ENCODE measurements at regions of chr5 and their contacts with region 1.

Region 1: DNA sequence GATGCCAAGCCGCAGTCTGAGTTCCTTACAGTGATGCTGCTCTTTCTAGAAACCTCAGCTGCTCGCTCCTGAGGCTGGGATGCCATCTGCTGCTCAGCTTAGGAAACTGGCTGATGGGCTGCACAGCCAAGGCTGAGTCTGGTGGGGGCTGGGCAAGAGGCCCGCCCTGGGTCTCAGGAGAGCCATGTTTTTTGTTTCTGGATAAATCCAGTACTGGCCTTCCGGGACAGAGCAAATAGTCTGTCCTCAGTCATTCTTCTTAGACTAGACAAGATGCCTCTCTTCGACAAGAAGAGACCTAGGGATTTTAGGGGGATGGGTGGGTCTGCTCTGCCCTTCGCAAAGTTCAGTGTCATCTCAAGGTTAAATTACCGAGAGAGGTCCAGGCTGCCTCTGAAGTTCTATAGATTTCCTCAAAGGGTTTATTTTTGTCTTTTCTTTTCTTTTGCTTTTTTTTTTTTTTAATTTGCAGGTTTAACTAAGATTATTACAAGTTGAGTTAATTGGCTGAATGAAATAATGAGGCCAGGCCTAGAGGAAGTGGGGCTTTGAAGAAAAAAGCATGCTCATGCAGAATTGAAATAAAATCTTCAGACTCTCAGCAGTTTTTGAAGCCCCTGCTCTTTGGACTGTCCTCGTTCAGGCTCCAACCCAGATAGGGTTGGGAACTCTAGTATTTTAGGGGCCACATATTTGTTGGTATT is 30.6 kb upstream of the MATR3 start:
- DNase-seq: peak; percentile 82 to 99 (median 90)

Region 2: DNA sequence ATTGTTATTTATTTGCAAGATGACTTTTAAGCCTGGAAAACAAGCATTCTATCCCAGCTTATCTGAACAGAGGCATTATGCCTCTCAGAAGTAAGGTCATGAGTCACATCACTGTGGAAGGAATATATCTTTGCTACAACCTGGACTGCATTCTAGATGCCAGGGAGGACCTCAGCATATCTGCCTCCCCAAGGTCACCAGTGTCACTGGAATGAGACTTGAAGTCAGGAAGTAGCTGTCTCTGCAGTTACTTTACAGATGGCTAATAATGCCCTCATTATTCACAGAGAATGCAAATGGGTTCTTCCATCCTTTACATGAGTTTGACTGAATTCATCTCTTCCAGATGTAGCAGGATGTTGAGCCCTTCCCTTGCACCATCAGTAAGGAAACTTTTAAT is 1225.6 kb before region 1 on chr5:
- intact Hi-C with region 1: no loop called
- DNase-seq: no peak

Region 3: GRCh38 chr5:138575194-138576015 is 687.5 kb before region 1 on chr5 and contains the start of gene HSPA9:
- intact Hi-C with region 1: loop called (anchors 5 kb)
- DNase-seq: peak; percentile 96 to 100 (median 97)

Region 4: DNA sequence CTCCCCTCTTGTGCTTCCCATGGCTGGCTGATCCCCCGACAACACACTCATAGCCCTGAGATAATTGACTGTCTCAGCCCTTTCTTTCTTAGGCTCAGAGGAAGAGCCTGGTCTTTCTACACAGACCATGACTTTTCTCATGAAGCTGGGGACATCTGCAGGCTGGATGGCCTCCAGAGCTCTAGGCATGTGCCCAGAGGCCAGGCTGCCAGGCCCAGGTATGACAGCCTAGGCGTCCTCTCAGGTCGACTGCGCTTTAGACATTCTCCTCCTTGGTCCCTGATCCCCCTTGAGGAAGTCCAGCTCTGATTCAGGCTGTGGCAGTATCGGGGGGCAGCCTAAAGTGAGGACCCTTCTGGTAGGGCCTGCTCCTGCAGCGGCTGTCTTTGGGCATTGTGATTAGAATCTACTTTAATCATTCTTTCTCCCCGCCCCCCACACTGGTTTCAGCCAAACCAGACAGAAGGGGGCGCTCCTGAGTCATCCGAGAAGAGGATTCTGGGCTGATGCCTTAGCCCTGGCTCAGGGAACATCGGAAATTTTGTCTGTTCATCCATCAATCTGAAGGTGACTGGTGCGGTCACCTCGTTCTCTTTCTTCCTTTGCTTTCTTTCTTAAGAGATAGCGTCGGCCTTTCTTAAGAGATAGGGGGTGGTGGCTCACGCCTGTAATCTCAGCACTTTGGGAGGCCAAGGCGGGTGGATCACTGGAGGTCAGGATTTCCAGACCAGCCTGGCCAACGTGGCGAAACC is 621.2 kb before region 1 on chr5:
- intact Hi-C with region 1: loop called (anchors 5 kb)
- DNase-seq: peak; percentile 37 to 95 (median 80)

Region 5: GRCh38 chr5:138824924-138825863 is 437.7 kb before region 1 on chr5:
- intact Hi-C with region 1: loop called (anchors 5 kb)
- DNase-seq: no peak

Region 6: DNA sequence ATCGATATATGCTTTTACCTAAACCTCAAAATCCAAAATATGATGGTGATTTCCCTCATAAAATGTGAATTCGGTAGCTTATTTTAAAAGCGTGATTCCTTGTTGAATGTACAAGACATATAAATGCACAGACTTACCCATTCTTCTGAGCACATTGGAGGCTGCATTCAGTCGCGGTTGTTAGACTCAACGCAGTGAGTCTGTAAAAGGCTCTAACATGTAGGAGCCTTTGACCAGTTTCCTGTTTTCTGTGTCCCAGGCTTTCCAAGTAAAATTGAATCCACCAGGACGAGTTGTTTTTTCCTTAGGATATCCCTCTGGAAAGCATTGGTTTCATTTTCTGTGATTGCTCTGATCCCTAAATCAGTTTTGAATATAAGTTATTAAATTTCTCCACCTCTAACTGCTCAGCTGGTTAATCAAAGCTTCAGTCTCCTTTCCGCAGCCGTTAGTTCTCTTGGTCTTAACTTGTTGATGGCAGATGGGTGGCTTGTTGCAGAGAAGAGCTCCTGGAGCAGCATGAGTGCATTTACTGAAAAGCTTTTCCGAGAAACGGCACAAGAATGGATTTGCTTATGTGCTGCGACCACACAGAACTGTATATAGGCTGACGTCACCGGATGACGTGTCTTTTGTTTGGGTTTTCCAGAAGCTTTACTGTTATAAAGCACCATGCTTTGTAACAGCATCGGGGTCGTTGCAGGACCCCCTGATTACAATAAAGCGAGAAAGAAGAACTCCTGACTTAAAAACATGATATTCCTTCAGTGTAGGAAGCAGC is 387.9 kb before region 1 on chr5 and contains the start of gene LRRTM2:
- intact Hi-C with region 1: loop called (anchors 5 kb)
- DNase-seq: peak in 9 of 10 donors; percentile 36 to 91 (median 69)

Region 7: GRCh38 chr5:139091439-139092156 is 171.3 kb before region 1 on chr5:
- intact Hi-C with region 1: loop called (anchors 1 kb)
- DNase-seq: peak in 1 of 10 donors; percentile 28

Measured in posterior cingulate gyrus (tissue), 11 donors.